ENCODE measurements at regions of chr16 and their contacts with region 1.

Region 1: DNA sequence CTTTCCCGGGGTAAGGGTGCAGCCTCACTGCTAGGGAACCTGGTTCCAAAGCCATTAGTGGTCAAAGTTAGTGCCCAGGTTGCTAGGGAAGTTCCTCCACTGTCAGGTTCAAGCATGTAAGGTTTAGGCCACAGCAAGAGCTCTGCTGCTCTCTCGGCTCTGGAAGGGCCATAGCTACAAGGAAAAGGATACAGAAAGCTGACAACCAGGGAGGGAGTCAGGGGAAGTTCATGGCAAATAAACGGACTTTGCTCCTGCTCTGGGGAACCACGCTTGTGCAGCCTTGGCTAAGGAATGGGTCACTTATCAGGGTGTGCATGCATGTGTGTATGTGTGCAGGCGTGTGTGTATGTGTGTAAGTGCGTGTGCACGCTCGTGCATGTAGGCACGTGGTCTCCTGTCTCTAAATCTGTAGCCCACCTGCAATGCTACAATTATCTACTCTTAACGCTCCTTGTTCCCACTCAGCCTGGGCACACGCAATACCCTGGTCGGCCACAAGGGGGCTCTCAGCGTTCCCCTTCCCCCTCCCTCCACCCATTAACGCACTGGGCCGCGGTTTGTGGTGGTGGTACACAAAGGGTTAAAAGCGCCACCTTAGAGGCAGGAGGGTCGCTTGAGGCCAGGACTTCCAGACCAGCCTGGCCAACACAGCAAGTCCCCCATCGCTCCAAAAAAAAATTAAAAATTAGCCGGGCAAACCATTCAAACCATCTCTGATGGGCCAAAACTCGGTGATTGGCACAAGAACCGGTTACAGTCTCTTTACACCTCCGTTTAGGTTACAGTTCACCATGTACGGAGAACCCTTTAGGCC is 48.4 kb upstream of the KDM8 start:
- DNase-seq: no peak
- H3K4me3 ChIP-seq: no peak overlapping the region
- H3K27me3 ChIP-seq: no peaks in the 10 kb centered on the region; the same call in none of the 2 replicates
- CTCF ChIP-seq: peak; percentile 98

Region 2: GRCh38 chr16:26993963-26994362 is 160.9 kb before region 1 on chr16:
- CTCF ChIA-PET with region 1: no interaction called
- POLR2A ChIA-PET with region 1: no interaction called
- DNase-seq: peak; percentile 30
- H3K4me3 ChIP-seq: no peak overlapping the region
- H3K27me3 ChIP-seq: no peaks in the 10 kb centered on the region; the same call in 1 of the 2 replicates
- CTCF ChIP-seq: no peak

Region 3: GRCh38 chr16:27242868-27243590 is 88.1 kb after region 1 on chr16:
- CTCF ChIA-PET with region 1: no interaction called
- POLR2A ChIA-PET with region 1: no interaction called
- DNase-seq: no peak
- H3K4me3 ChIP-seq: no peak overlapping the region
- H3K27me3 ChIP-seq: no peaks in the 10 kb centered on the region
- CTCF ChIP-seq: no peak

Region 4: GRCh38 chr16:27273670-27274423 is 118.9 kb after region 1 on chr16:
- CTCF ChIA-PET with region 1: no interaction called
- POLR2A ChIA-PET with region 1: no interaction called
- DNase-seq: no peak
- H3K4me3 ChIP-seq: no peak overlapping the region
- H3K27me3 ChIP-seq: no peaks in the 10 kb centered on the region
- CTCF ChIP-seq: no peak

Region 5: GRCh38 chr16:27461483-27462171 is 306.7 kb after region 1 on chr16:
- CTCF ChIA-PET with region 1: interaction called, 10 read pairs
- POLR2A ChIA-PET with region 1: no interaction called
- DNase-seq: no peak
- H3K4me3 ChIP-seq: no peak overlapping the region
- H3K27me3 ChIP-seq: no peaks in the 10 kb centered on the region
- CTCF ChIP-seq: no peak